AG04449 (cell line): ENCODE measurements at regions of chr13 and their contacts with region 1.

Region 1: DNA sequence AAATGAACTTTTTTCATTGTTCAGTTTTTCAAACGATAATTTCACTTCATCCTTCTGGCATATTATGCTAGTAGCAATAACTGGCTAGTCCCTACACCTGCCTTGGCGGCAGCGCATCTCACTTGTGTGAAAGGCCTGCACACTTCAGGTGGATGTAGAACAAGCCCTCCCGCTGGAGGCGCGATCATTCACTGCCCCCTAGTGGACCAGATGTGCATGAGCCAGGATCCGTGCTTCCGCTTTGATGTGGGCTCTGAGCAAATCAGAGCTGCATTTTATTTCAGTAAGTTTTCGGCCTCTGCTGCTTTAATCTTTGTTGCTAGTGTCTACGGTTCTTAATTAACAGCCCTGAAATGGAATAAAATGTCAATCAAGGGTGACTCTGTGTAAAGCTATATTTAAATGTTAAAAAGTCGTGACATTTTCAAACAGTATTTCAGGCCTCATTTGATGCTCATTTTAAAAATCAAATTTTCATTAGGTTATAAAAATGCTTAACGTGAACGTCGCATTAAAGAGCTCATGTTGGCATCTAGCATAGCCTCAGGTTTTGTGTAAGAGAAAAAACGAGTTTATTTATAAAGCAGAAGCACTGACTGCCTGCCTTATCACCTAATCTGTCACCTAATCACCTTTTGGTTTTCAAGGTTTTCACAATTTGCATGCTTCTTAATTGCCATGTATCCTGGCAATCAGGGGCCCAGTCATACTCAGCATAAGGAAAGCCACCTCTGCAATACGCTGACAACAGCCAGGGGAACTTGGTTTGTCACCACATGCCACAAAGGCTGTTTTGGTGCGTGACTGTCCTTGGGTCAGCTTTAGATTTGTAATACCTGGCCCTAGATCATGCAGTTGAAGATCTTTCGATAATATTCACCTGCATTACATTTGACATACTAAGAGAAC is 112.2 kb downstream of the TEX26 start:
- DNase-seq: no peak
- H3K4me3 ChIP-seq: no peak overlapping the region
- CTCF ChIP-seq: peak; percentile 94

Region 2: GRCh38 chr13:30802953-30803478 is 241.6 kb before region 1 on chr13:
- CTCF ChIA-PET with region 1: interaction called, 65 read pairs
- POLR2A ChIA-PET with region 1: no interaction called
- DNase-seq: no peak
- H3K4me3 ChIP-seq: peak overlapping the region; percentile 35
- CTCF ChIP-seq: peak; percentile 96

Region 3: GRCh38 chr13:31012655-31013024 is 32.0 kb before region 1 on chr13:
- CTCF ChIA-PET with region 1: interaction called, 25 read pairs
- POLR2A ChIA-PET with region 1: no interaction called
- DNase-seq: no peak
- H3K4me3 ChIP-seq: no peak overlapping the region
- CTCF ChIP-seq: peak; percentile 52

Region 4: GRCh38 chr13:31056644-31057271 is 12.1 kb after region 1 on chr13:
- CTCF ChIA-PET with region 1: interaction called, 13 read pairs
- POLR2A ChIA-PET with region 1: no interaction called
- DNase-seq: no peak
- H3K4me3 ChIP-seq: no peak overlapping the region
- CTCF ChIP-seq: no peak

Region 5: DNA sequence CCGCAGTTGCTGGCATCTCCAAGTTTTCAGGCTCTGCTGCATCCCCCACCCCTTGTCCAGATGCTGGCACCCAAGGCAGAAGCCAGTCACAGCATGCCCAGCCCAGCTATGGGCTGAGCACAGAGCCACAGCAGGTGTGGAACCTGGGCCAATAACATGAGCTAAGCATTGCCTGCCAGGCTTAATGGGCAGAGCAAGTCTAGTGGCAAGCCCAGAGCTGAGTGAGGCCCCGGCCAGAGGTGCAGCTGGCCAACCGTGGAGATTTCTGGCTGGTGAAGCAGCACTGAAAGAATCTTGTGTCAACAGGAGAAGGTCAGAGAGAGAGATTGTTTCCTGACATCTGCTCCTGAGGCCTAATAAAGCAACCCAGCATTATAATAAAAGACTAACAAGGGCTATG is 266.2 kb after region 1 on chr13:
- CTCF ChIA-PET with region 1: no interaction called
- POLR2A ChIA-PET with region 1: no interaction called
- DNase-seq: no peak
- H3K4me3 ChIP-seq: no peak overlapping the region
- CTCF ChIP-seq: no peak